ENCODE measurements at regions of chr14 and their contacts with region 1.

Region 1: DNA sequence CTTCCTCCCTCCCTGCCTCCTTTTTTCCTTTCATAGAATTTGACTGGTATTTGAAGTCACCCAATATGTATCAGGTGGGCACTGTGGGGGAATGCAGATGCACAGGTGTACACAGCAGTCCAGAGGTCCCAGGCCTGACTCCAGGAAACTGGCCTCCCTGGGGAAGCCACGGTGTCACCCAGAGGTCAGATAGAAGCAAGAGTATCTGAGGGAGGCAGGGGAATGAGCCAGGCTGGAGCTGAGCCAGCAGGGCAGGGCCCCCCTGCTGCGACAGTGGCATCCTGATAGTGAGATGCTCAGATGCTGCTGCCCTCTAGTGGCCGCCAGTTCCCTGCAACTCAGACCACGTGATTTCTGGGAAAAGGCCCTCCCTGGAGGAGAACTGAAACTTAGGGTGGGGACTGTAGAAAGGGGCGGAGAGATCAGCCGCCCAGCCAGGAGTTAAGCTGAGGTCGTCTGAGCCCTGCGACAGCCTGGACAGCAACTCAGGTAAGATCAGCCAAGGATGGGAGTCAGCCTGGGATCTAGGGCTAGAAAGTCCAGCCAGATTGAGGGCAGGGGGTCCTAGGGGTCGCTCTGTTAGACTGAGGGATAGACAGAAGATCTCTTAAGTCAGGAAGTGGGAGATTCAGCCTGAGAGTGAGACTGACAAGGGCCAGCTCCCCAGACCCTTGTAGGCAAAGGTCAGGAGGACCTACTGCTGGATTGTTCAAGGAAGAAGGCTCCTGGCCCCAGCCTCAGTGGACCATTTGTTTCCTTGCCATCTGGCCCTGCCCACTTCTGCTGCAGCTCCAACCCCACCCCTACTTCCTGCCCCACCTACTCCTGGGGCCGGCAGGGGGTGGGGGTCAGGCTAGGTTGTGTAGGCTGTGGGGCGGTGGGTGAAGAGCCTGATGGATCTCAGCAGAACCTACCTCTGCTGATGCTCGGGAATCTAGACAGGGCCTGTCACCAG is at the start of gene IRF9:
- DNase-seq: peak; percentile 90
- ATAC-seq: peak; percentile 92
- H3K4me3 Mint-ChIP-seq: peak within 1 kb of the TSS; percentile 98
- H3K27ac Mint-ChIP-seq: peak within 1 kb of the TSS; percentile 95
- H3K4me1 Mint-ChIP-seq: peaks cover 45% of the 10 kb centered on the region
- H3K27me3 Mint-ChIP-seq: no peaks in the 10 kb centered on the region
- CTCF ChIP-seq: no peak
- total RNA-seq, gene IRF9: 221 and 229 TPM in 2 replicates

Region 2: GRCh38 chr14:24058260-24058950 is 102.7 kb before region 1 on chr14:
- CTCF ChIA-PET with region 1: interaction called, 17 read pairs
- POLR2A ChIA-PET with region 1: interaction called, 13 read pairs
- intact Hi-C with region 1: loop called (anchors 1 kb)
- DNase-seq: no peak
- ATAC-seq: peak; percentile 84
- H3K4me3 Mint-ChIP-seq: no peak overlapping the region
- H3K27ac Mint-ChIP-seq: no peak overlapping the region
- H3K4me1 Mint-ChIP-seq: peaks cover 2% of the 10 kb centered on the region
- H3K27me3 Mint-ChIP-seq: no peaks in the 10 kb centered on the region
- CTCF ChIP-seq: no peak

Region 3: DNA sequence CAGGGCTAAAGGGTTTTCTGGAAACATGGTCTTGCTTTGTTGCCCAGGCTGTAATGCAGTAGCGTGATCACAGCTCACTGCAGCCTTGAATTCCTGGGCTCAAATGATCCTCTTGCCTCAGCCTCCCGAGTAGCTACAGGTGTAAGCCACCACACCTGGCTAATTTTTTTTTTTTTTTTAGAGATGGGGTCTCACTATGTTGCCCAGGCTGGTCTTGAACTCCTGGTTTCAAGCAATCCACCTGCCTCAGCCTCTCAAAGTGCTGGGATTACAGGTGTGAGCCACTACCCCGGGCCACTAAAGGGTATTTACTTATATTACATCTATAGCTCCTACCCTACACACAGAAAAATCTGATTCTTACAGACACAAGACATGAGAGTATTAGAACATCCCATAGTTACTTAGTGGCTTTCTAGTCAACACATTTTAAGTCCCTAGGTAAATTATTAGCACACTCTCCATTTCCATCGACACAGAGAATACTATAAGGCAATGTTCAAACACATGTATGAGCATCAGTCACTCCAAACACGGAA is 52.7 kb before region 1 on chr14:
- CTCF ChIA-PET with region 1: interaction called, 45 read pairs
- POLR2A ChIA-PET with region 1: interaction called, 93 read pairs
- intact Hi-C with region 1: loop called (anchors 1 kb)
- DNase-seq: no peak
- ATAC-seq: no peak
- H3K4me3 Mint-ChIP-seq: no peak overlapping the region
- H3K27ac Mint-ChIP-seq: peak overlapping the region; percentile 90
- H3K4me1 Mint-ChIP-seq: peaks cover 12% of the 10 kb centered on the region
- H3K27me3 Mint-ChIP-seq: no peaks in the 10 kb centered on the region
- CTCF ChIP-seq: no peak

Region 4: DNA sequence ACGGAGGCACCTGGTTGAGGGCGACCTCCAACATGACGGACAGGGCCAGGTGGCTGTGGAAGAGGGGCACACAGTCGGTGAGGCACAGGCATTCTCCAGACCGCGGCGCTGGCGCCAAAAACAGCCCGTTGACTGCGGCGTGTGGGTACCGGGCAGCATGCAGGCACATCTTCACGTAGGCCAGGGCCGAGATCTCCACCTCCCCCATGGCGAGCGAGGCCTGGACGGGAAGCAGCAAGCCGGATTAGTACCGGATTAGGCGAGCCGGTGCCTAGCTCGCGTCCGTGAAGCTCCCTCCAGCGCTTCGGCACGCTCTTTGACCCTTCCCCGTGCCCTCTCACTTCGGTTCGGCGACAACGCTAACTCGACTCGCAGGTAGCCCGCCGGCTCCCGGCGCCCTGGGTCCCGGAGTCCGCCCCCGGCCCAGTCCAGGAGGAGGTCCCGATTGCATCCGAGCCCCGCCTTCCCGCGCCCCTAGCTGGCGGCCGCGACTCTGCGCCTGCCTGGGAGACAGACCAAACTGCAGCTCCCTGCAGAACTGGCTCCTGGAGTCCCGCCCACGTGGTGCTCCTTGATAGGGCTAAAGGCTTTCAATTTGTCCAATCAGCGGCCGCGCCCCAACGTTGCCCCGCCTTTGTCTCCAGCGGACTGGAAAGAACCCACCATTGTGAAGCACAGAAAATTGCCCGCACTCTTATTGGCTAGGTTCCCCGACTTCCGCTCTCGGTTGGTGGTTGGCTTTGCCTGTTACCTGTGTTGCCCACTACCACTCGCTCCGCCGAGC is 19.8 kb before region 1 on chr14 and contains the start of gene EMC9:
- CTCF ChIA-PET with region 1: interaction called, 45 read pairs
- POLR2A ChIA-PET with region 1: interaction called, 67 read pairs
- intact Hi-C with region 1: loop called (anchors 1 kb)
- DNase-seq: peak; percentile 92
- ATAC-seq: peak; percentile 90
- H3K4me3 Mint-ChIP-seq: peak within 1 kb of the TSS; percentile 83
- H3K27ac Mint-ChIP-seq: peak within 1 kb of the TSS; percentile 87
- H3K4me1 Mint-ChIP-seq: peaks cover 78% of the 10 kb centered on the region
- H3K27me3 Mint-ChIP-seq: no peaks in the 10 kb centered on the region
- CTCF ChIP-seq: no peak
- total RNA-seq, gene EMC9: 22.5 and 22.6 TPM in 2 replicates

Region 5: GRCh38 chr14:24179961-24180796 is 19.1 kb after region 1 on chr14:
- CTCF ChIA-PET with region 1: interaction called, 6 read pairs
- POLR2A ChIA-PET with region 1: interaction called, 11 read pairs
- intact Hi-C with region 1: no loop called
- DNase-seq: no peak
- ATAC-seq: no peak
- H3K4me3 Mint-ChIP-seq: no peak overlapping the region
- H3K27ac Mint-ChIP-seq: peak overlapping the region; percentile 71
- H3K4me1 Mint-ChIP-seq: peaks cover 7% of the 10 kb centered on the region
- H3K27me3 Mint-ChIP-seq: no peaks in the 10 kb centered on the region
- CTCF ChIP-seq: no peak

Region 6: GRCh38 chr14:24215495-24216344 is 54.6 kb after region 1 on chr14 and contains the start of gene MDP1:
- CTCF ChIA-PET with region 1: interaction called, 7 read pairs
- POLR2A ChIA-PET with region 1: interaction called, 31 read pairs
- intact Hi-C with region 1: loop called (anchors 1 kb)
- DNase-seq: peak; percentile 71
- ATAC-seq: peak; percentile 75
- H3K4me3 Mint-ChIP-seq: peak within 1 kb of the TSS; percentile 93
- H3K27ac Mint-ChIP-seq: peak within 1 kb of the TSS; percentile 95
- H3K4me1 Mint-ChIP-seq: peaks cover 50% of the 10 kb centered on the region
- H3K27me3 Mint-ChIP-seq: no peaks in the 10 kb centered on the region
- CTCF ChIP-seq: no peak
- total RNA-seq, gene MDP1: 12.7 and 16.3 TPM in 2 replicates

Region 7: GRCh38 chr14:24442273-24443052 is 281.3 kb after region 1 on chr14 and contains the start of gene SDR39U1:
- CTCF ChIA-PET with region 1: no interaction called
- POLR2A ChIA-PET with region 1: no interaction called
- intact Hi-C with region 1: loop called (anchors 1 kb)
- DNase-seq: peak; percentile 81
- ATAC-seq: peak; percentile 89
- H3K4me3 Mint-ChIP-seq: peak within 1 kb of the TSS; percentile 98
- H3K27ac Mint-ChIP-seq: peak within 1 kb of the TSS; percentile 98
- H3K4me1 Mint-ChIP-seq: peaks cover 48% of the 10 kb centered on the region
- H3K27me3 Mint-ChIP-seq: no peaks in the 10 kb centered on the region
- CTCF ChIP-seq: no peak
- total RNA-seq, gene SDR39U1: 70.6 and 80.0 TPM in 2 replicates

Region 8: DNA sequence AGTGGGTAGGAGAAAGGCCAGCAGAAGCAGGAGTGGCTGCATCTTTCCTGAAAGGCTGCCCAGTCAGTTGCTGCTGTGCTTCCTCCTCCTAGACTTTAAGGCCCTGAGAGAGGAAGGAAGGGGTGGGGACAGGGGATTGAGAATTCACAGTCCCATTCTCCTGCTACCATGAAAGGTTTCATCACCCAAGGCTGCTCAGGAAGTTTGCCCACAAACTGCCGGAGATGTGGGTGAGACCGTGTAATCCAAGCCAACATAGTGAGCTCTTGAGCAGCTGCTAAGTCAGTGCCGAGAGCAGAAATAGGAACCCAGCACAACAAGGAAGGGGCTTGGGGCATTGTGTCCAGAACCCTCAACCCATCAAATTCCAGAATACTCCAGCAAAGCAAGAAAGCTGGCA is 415.1 kb after region 1 on chr14 and contains the start of gene CTSG:
- CTCF ChIA-PET with region 1: no interaction called
- POLR2A ChIA-PET with region 1: no interaction called
- intact Hi-C with region 1: no loop called
- DNase-seq: no peak
- ATAC-seq: no peak
- H3K4me3 Mint-ChIP-seq: no peak within 1 kb of the TSS
- H3K27ac Mint-ChIP-seq: no peak within 1 kb of the TSS
- H3K4me1 Mint-ChIP-seq: no peaks in the 10 kb centered on the region
- H3K27me3 Mint-ChIP-seq: peaks cover 7% of the 10 kb centered on the region
- CTCF ChIP-seq: no peak
- total RNA-seq, gene CTSG: not detected in 2 replicates

Measured in activated B cell treated with CpG ODN at 0.5 μM for 24 hours (primary cell).